ENCODE measurements at regions of chr7 and their contacts with region 1.

Region 1: GRCh38 chr7:100444311-100445278 is 8.3 kb upstream of the PPP1R35 start:
- DNase-seq: no peak
- ATAC-seq: peak in 1 of 2 donors; percentile 29
- H3K4me3 Mint-ChIP-seq: peak overlapping the region in 2 of 10 donors; percentile 43 to 48
- H3K27ac Mint-ChIP-seq: peak overlapping the region in 5 of 10 donors; percentile 22 to 70 (median 57)
- H3K4me1 Mint-ChIP-seq: peaks cover 8 to 13% (median 12%) of the 10 kb centered on the region in 4 donors
- H3K27me3 Mint-ChIP-seq: no peaks in the 10 kb centered on the region

Region 2: DNA sequence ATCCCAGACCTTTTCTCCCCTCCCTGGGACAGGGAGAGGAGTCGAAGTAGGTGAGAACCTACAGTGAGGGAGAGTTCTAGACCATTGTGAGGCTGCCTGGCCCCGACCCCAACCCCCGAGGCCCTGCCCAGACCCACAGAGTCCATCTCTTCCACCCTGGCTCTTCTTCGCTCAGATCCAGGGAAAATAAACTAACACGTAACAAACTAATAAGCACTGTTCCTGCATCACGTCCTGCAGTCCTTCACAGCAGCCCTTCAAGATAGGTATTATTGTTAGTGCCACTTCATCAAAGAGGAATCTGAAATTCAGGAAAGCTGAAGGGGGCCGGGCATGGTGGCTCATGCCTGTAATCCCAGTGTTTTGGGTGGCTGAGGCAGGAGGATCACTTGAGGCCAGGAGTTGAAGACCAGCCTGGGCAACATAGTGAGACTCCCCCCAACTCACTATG is 19.6 kb after region 1 on chr7 and contains the start of gene SPACDR:
- POLR2A ChIA-PET with region 1: interaction called, 12 read pairs
- DNase-seq: no peak
- ATAC-seq: no peak
- H3K4me3 Mint-ChIP-seq: no peak within 1 kb of the TSS
- H3K27ac Mint-ChIP-seq: peak within 1 kb of the TSS in 7 of 10 donors; percentile 28 to 63 (median 46)
- H3K4me1 Mint-ChIP-seq: peaks cover 1 to 12% (median 6%) of the 10 kb centered on the region in 4 donors
- H3K27me3 Mint-ChIP-seq: no peaks in the 10 kb centered on the region
- polyA plus RNA-seq, gene SPACDR: 0.28 to 0.56 TPM in 2 of 3 donors, not detected in the other

Measured in naive thymus-derived CD8-positive, alpha-beta T cell (primary cell).